ENCODE measurements at regions of chr5 and their contacts with region 1.

Region 1: DNA sequence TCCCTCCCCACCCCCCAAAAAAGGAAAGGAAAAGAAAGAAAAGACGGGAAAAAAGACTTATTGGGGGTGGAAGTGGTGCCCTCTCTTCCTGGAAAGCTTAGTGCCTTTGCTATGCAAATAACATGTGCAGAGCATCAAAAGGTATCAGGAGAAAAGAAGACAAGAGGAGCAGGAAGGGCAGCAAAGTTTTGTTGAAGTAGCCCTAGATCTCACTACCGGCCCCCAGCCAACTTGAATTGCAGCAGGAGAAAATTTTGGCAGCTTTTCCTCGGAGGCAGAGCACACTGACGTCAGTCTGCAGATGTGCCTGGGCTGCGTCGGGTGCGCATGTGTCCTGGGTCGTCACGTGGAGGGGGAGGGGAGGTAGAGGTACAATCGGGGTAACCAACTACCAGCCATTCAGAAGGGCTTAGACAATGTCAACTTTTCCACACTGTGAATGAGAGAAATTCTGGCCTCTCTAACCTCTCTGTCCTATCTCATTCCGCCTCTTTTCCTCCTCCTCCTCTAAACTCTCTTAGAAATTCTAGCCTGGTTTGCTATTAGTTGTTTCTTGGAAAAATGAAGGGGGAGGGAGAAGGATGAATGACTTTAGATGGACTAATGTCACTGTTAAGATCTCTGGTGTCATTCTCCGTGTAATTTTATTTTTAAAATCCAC is at the start of gene ADAMTS6:
- DNase-seq: peak; percentile 39 to 89
- ATAC-seq: peak; percentile 74 to 75 (median 74)
- H3K4me3 ChIP-seq: peak within 1 kb of the TSS; percentile 52
- H3K4me3 Mint-ChIP-seq: no peak within 1 kb of the TSS
- H3K27ac ChIP-seq: peak within 1 kb of the TSS; percentile 55
- H3K27ac Mint-ChIP-seq: peak within 1 kb of the TSS in 1 of 2 donors; percentile 89
- H3K4me1 ChIP-seq: peaks cover 13% of the 10 kb centered on the region
- H3K4me1 Mint-ChIP-seq: peaks cover 10 to 24% of the 10 kb centered on the region in 2 donors
- H3K27me3 ChIP-seq: peaks cover 13% of the 10 kb centered on the region
- H3K27me3 Mint-ChIP-seq: peaks cover 0 to 2% of the 10 kb centered on the region in 2 donors
- CTCF ChIP-seq: no peak
- total RNA-seq, gene ADAMTS6: 0.47 to 1.4 (median 1.1) TPM

Region 2: GRCh38 chr5:64634997-64635686 is 846.6 kb before region 1 on chr5:
- intact Hi-C with region 1: loop called (anchors 2 kb)
- DNase-seq: peak in 1 of 2 donors; percentile 67
- ATAC-seq: peak; percentile 58 to 67 (median 60)
- H3K4me3 ChIP-seq: no peak overlapping the region
- H3K4me3 Mint-ChIP-seq: no peak overlapping the region
- H3K27ac ChIP-seq: no peak overlapping the region
- H3K27ac Mint-ChIP-seq: no peak overlapping the region
- H3K4me1 ChIP-seq: no peaks in the 10 kb centered on the region
- H3K4me1 Mint-ChIP-seq: peaks cover 0 to 6% of the 10 kb centered on the region in 2 donors
- H3K27me3 ChIP-seq: no peaks in the 10 kb centered on the region
- H3K27me3 Mint-ChIP-seq: peaks cover 9 to 37% of the 10 kb centered on the region in 2 donors
- CTCF ChIP-seq: peak; percentile 89

Region 3: DNA sequence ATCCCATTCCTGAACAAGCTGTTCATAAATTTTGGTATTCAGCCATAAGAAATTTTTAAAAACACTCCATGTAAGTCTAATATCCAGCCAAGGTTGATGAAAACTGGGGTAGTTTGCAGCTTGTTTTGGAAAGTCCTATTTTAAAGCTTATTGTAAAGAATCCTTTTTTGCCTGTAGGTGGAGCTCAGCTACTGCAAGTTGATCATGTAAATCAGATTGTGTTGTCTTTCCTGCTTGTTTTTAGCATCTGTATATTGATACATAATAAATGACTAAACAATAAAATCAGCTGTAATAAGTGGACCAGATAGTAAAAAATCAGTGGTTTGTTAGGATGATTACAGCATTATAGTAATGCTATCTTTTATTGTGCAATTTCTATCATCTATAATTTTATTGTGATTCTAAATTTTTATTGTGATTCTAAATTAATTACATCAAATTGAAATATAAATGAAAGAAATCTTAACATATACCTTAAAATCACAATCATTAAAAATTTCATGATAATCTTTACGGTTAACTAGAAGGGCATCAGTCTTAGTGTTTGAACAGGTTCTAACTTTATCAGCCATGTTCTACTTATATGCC is 670.6 kb before region 1 on chr5:
- intact Hi-C with region 1: loop called (anchors 1 kb)
- DNase-seq: peak in 1 of 2 donors; percentile 65
- ATAC-seq: peak in 2 of 3 donors; percentile 50 to 53
- H3K4me3 ChIP-seq: no peak overlapping the region
- H3K4me3 Mint-ChIP-seq: no peak overlapping the region
- H3K27ac ChIP-seq: no peak overlapping the region
- H3K27ac Mint-ChIP-seq: no peak overlapping the region
- H3K4me1 ChIP-seq: no peaks in the 10 kb centered on the region
- H3K4me1 Mint-ChIP-seq: no peaks in the 10 kb centered on the region
- H3K27me3 ChIP-seq: no peaks in the 10 kb centered on the region
- H3K27me3 Mint-ChIP-seq: no peaks in the 10 kb centered on the region
- CTCF ChIP-seq: peak; percentile 64

Region 4: DNA sequence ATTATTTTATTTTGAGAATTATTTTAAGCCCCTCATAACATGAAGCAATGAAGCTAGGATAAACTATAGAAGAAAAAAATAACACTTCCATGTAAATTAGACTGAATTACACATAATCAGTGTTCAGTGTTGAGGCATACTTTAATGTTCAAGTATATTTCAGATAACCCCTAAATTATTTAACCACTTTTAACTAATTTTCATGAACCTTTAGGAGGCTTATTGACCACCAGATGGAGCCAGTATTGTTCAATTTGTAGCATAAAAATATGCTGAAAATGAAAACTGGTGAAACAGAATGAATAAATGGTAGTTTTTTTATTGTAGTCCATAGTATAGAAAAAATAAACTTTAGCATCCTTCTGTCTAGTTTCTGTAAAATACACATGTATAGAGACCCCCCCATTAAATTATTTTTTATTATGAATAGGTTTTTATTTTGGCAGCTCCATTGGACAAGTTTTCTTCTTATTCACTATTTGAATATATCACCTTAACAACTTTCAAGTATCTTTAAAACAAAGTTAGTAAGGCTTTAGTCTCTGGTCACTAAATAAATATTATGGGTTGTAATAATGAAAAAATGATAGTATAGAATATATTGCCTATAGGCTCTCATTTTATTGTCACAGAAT is 522.9 kb before region 1 on chr5:
- intact Hi-C with region 1: loop called (anchors 1 kb)
- DNase-seq: peak in 1 of 2 donors; percentile 54
- ATAC-seq: no peak
- H3K4me3 ChIP-seq: no peak overlapping the region
- H3K4me3 Mint-ChIP-seq: no peak overlapping the region
- H3K27ac ChIP-seq: no peak overlapping the region
- H3K27ac Mint-ChIP-seq: no peak overlapping the region
- H3K4me1 ChIP-seq: no peaks in the 10 kb centered on the region
- H3K4me1 Mint-ChIP-seq: peaks cover 0 to 5% of the 10 kb centered on the region in 2 donors
- H3K27me3 ChIP-seq: no peaks in the 10 kb centered on the region
- H3K27me3 Mint-ChIP-seq: no peaks in the 10 kb centered on the region
- CTCF ChIP-seq: peak; percentile 41

Region 5: GRCh38 chr5:65035211-65036206 is 446.3 kb before region 1 on chr5:
- intact Hi-C with region 1: loop called (anchors 2 kb)
- DNase-seq: peak; percentile 71 to 93
- ATAC-seq: peak; percentile 85 to 92 (median 86)
- H3K4me3 ChIP-seq: peak overlapping the region; percentile 52
- H3K4me3 Mint-ChIP-seq: peak overlapping the region; percentile 87
- H3K27ac ChIP-seq: peak overlapping the region; percentile 85
- H3K27ac Mint-ChIP-seq: peak overlapping the region; percentile 86 to 94
- H3K4me1 ChIP-seq: peaks cover 15% of the 10 kb centered on the region
- H3K4me1 Mint-ChIP-seq: peaks cover 24 to 33% of the 10 kb centered on the region in 2 donors
- H3K27me3 ChIP-seq: no peaks in the 10 kb centered on the region
- H3K27me3 Mint-ChIP-seq: peaks cover 0 to 3% of the 10 kb centered on the region in 2 donors
- CTCF ChIP-seq: no peak

Region 6: DNA sequence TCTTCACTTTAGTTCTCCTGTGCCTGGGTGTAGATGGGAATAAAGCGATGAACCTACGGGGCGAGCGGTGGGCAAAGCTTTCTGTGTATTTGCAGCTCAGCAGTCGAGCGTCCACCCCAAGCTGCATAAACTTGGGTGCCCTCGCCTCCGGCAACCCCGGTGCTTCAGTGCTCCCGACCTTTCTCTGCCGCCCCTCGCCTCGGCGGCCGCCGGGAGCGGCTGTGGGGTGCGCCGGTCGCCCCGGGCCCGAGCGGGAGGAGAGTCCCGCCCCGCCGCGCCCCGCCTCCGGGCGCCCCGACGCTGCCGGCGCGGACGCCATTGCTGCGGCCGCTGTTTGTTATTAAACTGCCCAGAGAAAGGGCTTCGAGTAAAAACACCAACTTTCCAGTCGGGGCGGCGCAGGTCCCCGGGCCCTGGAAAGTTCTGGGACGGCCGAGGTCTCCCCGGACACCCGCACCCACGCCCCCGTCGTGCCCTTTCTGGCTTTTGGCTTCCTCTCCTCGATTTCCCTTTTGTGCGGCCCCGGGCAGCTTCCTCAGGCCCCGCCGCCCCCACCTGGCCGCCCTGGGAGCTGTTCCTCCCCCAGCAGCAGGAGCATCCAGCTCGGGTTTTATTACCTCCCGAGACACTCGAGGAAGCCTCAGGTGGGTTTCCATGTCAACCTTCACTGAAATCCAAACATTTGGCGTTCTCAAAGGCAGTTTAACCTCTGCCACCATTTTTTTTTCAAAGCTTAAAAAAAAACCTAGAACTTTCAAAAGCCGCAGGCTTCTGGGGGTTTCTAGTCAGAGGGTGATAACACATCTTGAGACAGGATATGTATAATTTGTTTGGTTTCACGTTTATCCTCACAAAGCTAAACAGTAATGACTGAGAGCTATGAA is 378.7 kb before region 1 on chr5:
- intact Hi-C with region 1: loop called (anchors 1 kb)
- DNase-seq: peak; percentile 49 to 79
- ATAC-seq: peak; percentile 81 to 82 (median 82)
- H3K4me3 ChIP-seq: peak overlapping the region; percentile 79
- H3K4me3 Mint-ChIP-seq: peak overlapping the region; percentile 86
- H3K27ac ChIP-seq: peak overlapping the region; percentile 86
- H3K27ac Mint-ChIP-seq: peak overlapping the region; percentile 72 to 82
- H3K4me1 ChIP-seq: peaks cover 15% of the 10 kb centered on the region
- H3K4me1 Mint-ChIP-seq: peaks cover 26 to 33% of the 10 kb centered on the region in 2 donors
- H3K27me3 ChIP-seq: no peaks in the 10 kb centered on the region
- H3K27me3 Mint-ChIP-seq: peaks cover 0 to 3% of the 10 kb centered on the region in 2 donors
- CTCF ChIP-seq: no peak

Region 7: DNA sequence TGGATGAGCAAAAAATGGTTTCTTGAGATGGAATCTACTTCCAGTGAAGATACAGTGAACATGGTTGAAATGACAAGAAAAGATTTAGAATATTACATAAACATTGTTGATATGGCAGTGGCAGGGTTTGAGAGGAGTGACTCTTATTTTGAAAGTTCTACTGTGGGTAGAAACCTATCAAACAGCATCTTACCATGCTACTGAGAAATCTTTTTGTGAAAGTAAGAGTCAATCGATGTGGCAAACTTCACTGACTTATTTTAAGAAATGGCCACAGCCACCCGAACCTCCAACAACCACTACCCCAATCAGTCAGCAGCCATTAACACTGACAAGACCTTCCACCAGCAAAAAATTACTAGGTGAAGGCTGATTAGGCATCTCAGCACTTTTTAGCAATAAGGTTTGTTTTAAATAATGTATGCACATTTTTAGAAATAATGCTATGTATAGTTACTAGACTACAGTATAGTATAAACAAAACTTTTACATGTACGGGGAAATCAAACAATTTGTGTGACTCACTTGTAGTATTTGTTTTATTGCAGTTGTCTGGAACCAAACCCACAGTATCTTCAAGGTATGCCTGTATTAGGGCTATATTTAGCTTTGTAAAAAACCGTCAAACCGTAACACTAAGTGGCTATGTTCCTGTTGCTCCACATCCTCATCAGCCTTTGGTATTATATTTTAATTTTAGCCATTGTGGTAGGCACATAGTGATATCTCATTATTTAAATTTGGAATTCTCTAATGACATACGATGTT is 30.6 kb after region 1 on chr5:
- intact Hi-C with region 1: no loop called
- DNase-seq: no peak
- ATAC-seq: no peak
- H3K4me3 ChIP-seq: no peak overlapping the region
- H3K4me3 Mint-ChIP-seq: no peak overlapping the region
- H3K27ac ChIP-seq: no peak overlapping the region
- H3K27ac Mint-ChIP-seq: no peak overlapping the region
- H3K4me1 ChIP-seq: no peaks in the 10 kb centered on the region
- H3K4me1 Mint-ChIP-seq: peaks cover 0 to 7% of the 10 kb centered on the region in 2 donors
- H3K27me3 ChIP-seq: no peaks in the 10 kb centered on the region
- H3K27me3 Mint-ChIP-seq: no peaks in the 10 kb centered on the region
- CTCF ChIP-seq: no peak

Region 8: DNA sequence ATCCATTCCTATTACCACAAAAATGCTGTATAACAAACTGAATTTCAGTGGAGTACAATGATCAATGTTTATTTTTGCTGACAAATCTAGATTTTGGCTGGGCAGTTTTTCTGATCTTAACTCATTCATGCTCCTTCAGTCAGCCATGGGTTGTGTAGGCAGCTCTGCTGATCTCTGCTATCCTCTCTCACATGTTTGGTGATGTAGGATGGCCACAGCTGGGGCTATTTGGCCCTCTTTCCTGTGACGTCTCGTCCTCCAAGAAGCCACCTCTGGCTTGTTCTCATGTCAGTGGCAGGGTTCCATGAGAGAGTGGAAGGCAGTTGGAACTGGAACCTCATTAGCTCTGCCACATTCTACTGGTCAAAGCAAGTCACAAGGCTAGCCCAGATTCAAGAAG is 249.1 kb after region 1 on chr5:
- intact Hi-C with region 1: no loop called
- DNase-seq: no peak
- ATAC-seq: no peak
- H3K4me3 ChIP-seq: no peak overlapping the region
- H3K4me3 Mint-ChIP-seq: no peak overlapping the region
- H3K27ac ChIP-seq: no peak overlapping the region
- H3K27ac Mint-ChIP-seq: no peak overlapping the region
- H3K4me1 ChIP-seq: no peaks in the 10 kb centered on the region
- H3K4me1 Mint-ChIP-seq: no peaks in the 10 kb centered on the region
- H3K27me3 ChIP-seq: no peaks in the 10 kb centered on the region
- H3K27me3 Mint-ChIP-seq: peaks cover 8 to 9% of the 10 kb centered on the region in 2 donors
- CTCF ChIP-seq: no peak